HepG2 (cell line): ENCODE measurements at regions of chr6 and their contacts with region 1.

Region 1: DNA sequence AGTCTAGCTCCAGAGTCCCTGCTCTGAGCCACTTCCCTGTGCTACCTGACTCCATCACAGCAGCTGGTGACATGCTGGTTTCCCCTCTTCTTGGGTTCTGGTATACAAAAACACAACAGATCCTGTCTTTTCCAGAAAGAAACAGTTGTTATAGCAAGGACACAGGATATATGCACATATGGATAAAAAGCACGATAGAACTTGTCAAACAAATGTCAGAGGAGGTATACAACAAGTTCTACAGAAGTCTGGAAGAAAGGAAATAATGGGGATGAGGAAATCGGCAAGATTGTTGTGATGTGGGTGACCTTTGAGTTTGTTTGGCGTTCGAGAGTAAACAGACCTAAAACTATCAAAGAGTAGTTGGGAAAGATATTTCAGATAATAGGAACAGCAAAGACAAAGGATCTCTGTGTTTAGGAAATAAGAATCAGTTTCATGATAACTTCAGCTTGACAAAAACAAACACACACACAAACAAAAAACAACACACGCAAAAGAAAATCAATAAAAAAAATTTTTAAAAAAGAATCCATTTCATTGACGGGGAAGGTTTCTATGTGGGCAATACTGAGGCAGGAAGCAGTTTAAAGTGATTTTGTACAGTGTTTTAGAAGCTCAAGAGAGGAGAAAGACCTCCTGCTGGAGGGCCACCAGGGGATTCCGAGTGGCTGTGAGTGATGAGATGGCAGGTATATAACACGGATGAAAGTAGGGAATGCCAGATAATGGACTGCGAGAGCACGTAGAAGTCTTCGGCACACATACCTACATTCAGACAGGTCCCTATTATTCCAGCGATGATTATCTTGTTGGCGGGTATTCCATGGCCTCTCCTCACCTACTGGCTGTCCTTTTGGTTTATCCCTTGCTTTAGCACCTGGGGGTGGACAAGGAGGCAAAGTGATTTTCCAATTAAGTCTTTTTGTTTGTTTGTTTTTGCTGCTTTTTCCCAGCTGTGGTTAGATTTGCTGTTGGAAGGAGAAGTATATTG is 174.9 kb downstream of the HS3ST5 start:
- DNase-seq: peak; percentile 99
- ATAC-seq: peak; percentile 87
- H3K4me3 ChIP-seq: peak overlapping the region; percentile 41 to 60 (median 56)
- H3K27ac ChIP-seq: peak overlapping the region; percentile 99
- H3K4me1 ChIP-seq: peaks cover 91% of the 10 kb centered on the region
- H3K27me3 ChIP-seq: no peaks in the 10 kb centered on the region; a peak in 1 of 5 replicates
- CTCF ChIP-seq: 0 out of 2 replicates have a peak, but pooled peaks have one; percentile 7
- EP300 ChIP-seq: peak; percentile 79 to 99
- POLR2A ChIP-seq: peak; percentile 62 to 69
- RAD21 ChIP-seq: 0 out of 2 replicates have a peak, but pooled peaks have one; percentile 35

Region 2: DNA sequence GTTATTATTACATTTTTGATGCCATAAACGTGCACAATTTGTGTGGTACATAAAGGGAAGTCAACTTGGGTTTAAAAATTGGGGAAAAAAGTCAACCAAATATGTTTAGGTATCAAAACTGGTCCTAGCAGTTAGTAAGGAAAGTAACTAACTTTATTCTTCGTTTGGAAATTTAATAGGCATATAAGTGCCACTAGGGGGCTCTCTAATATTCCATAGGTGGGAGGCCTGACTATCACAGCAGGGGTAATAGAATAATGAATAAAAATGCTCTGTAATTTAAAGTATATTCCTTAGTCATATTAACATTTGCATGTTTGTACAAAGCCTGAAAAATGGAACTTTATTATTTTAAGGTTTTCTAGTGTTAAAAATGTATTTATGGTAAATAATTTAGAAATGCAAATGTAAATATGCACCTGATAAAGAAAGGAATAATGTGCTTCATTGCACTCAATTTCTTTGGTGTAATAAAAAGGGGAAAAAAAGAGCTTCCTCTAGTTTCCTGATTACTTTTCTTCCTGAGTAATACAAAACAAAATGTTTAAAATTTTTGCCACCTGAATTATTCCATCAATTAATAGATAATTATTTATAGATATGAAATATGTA is 71.2 kb before region 1 on chr6:
- CTCF ChIA-PET with region 1: no interaction called
- POLR2A ChIA-PET with region 1: interaction called, 3 read pairs
- in situ Hi-C with region 1: no loop called
- intact Hi-C with region 1: loop called (anchors 2 kb)
- DNase-seq: peak; percentile 46
- ATAC-seq: no peak
- H3K4me3 ChIP-seq: no peak overlapping the region
- H3K27ac ChIP-seq: no peak overlapping the region
- H3K4me1 ChIP-seq: peaks cover 12% of the 10 kb centered on the region
- H3K27me3 ChIP-seq: no peaks in the 10 kb centered on the region
- CTCF ChIP-seq: peak; percentile 63
- EP300 ChIP-seq: no peak
- POLR2A ChIP-seq: no peak
- RAD21 ChIP-seq: peak; percentile 62; the same call in 1 of the 2 replicates

Region 3: GRCh38 chr6:114121913-114122645 is 45.8 kb before region 1 on chr6:
- CTCF ChIA-PET with region 1: no interaction called
- POLR2A ChIA-PET with region 1: no interaction called
- in situ Hi-C with region 1: no loop called
- intact Hi-C with region 1: no loop called
- DNase-seq: no peak
- ATAC-seq: no peak
- H3K4me3 ChIP-seq: no peak overlapping the region
- H3K27ac ChIP-seq: no peak overlapping the region
- H3K4me1 ChIP-seq: peaks cover 9% of the 10 kb centered on the region
- H3K27me3 ChIP-seq: no peaks in the 10 kb centered on the region
- CTCF ChIP-seq: no peak
- EP300 ChIP-seq: no peak
- POLR2A ChIP-seq: no peak
- RAD21 ChIP-seq: no peak

Region 4: DNA sequence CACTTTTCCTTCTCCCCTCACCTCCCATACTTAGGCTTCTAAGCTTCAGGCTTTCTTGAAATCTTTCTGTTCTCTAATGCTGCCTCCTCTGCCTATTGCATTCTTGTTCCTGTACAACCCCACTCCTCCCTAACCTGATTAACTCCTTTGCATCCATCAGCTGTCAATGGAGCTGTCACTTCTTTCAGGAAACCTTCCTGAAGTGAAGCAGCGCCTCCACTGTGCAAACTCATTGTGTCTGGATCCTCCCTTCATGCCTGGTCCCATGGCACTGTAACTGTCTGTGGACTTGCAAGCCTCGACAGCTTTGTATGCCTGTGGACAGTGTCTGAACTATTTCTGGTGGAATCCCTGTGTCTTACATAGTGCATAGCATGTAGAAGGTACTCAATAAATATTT is 10.0 kb before region 1 on chr6:
- CTCF ChIA-PET with region 1: no interaction called
- POLR2A ChIA-PET with region 1: interaction called, 13 read pairs
- in situ Hi-C with region 1: no loop called
- intact Hi-C with region 1: loop called (anchors 1 kb)
- DNase-seq: no peak
- ATAC-seq: no peak
- H3K4me3 ChIP-seq: no peak overlapping the region
- H3K27ac ChIP-seq: no peak overlapping the region
- H3K4me1 ChIP-seq: peaks cover 47% of the 10 kb centered on the region
- H3K27me3 ChIP-seq: no peaks in the 10 kb centered on the region
- CTCF ChIP-seq: no peak
- EP300 ChIP-seq: no peak
- POLR2A ChIP-seq: no peak
- RAD21 ChIP-seq: no peak

Region 5: GRCh38 chr6:114304304-114304887 is 136.5 kb after region 1 on chr6:
- CTCF ChIA-PET with region 1: no interaction called
- POLR2A ChIA-PET with region 1: interaction called, 7 read pairs
- in situ Hi-C with region 1: no loop called
- intact Hi-C with region 1: loop called (anchors 5 kb)
- DNase-seq: peak; percentile 19
- ATAC-seq: no peak
- H3K4me3 ChIP-seq: no peak overlapping the region
- H3K27ac ChIP-seq: no peak overlapping the region
- H3K4me1 ChIP-seq: peaks cover 36% of the 10 kb centered on the region
- H3K27me3 ChIP-seq: no peaks in the 10 kb centered on the region
- CTCF ChIP-seq: peak; percentile 34; the same call in 1 of the 2 replicates
- EP300 ChIP-seq: no peak
- POLR2A ChIP-seq: no peak
- RAD21 ChIP-seq: no peak